Pancreas (tissue), 10 donors: ENCODE measurements at regions of chr11 and their contacts with region 1.

Region 1: DNA sequence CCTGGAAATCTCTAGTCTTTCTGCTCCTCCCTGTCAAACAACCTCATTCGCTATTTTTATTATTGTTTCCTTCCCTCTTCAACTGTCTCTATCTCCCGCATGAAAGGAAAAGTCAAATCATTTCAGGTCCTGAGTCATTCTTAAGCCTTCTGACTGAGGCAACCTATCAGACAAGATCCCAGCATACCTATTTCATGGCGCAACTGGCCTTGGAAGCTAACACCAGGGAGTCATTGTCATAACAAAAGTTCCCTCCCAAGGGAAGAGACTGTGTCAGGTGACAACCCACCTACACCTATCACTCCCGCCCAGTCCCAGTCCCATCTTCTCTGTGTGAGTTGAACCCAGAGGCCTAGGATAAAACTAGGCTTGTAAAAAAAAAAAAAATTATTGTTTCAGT is 10.2 kb upstream of the ARHGAP42 start:
- DNase-seq: no peak
- ATAC-seq: no peak
- H3K4me3 ChIP-seq: no peak overlapping the region
- H3K27ac ChIP-seq: no peak overlapping the region
- H3K4me1 ChIP-seq: no peaks in the 10 kb centered on the region
- H3K27me3 ChIP-seq: no peaks in the 10 kb centered on the region
- CTCF ChIP-seq: no peak

Region 2: GRCh38 chr11:100863080-100863581 is 186.2 kb after region 1 on chr11:
- intact Hi-C with region 1: loop called in 1 of 3 experiments (anchors 10 kb)
- DNase-seq: peak in 1 of 6 donors; percentile 18
- ATAC-seq: peak in 3 of 4 donors; percentile 60 to 74 (median 62)
- H3K4me3 ChIP-seq: no peak overlapping the region
- H3K27ac ChIP-seq: no peak overlapping the region
- H3K4me1 ChIP-seq: no peaks in the 10 kb centered on the region
- H3K27me3 ChIP-seq: peaks cover 0 to 4% (median 0%) of the 10 kb centered on the region in 4 donors
- CTCF ChIP-seq: no peak